Activated naive CD4-positive, alpha-beta T cell treated with anti-CD3 and anti-CD28 coated beads for 36 hours (primary cell): ENCODE measurements at regions of chr15 and their contacts with region 1.

Region 1: DNA sequence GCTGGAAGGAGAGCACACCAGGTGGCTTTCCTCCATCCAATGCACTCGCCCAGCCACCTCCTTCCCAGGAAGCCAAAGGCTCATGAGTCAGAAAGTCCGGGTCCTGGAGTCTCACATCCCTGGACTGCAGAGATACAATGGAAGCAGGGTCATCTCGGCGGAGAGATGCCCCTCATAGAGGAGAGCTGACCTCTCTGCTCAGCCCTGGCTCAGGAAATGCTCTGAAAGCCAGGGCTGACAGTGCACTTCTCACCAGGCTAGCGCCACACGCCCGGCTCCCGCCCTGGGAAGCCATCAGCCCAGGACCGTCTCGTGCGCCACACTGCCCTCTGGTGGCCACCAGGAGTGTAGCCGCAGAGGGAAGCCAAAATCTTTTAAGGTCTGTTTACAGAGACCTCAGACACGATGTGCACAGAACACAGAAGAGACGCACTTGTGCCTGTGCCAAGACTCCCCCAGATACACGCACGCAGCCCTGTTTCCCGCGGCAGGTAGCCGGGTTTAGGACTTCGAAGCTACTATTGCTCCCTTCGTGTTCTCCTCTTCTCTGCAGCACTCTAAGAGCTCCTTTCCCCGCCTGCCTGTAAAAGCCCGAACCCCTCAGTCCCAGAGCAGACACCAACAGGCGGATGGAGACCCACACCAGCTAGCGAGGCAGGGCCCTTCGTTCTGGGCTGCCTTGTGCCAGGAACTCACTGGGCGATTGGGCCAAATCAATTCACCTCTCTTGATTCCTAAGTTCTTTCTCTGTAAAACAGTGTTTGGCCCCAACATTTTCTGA is 9.7 kb downstream of the NTRK3 start:
- DNase-seq: peak; percentile 83
- H3K4me3 Mint-ChIP-seq: no peak overlapping the region
- H3K27ac Mint-ChIP-seq: no peak overlapping the region
- H3K4me1 Mint-ChIP-seq: peaks cover 5% of the 10 kb centered on the region
- H3K27me3 Mint-ChIP-seq: peaks cover 6% of the 10 kb centered on the region

Region 2: DNA sequence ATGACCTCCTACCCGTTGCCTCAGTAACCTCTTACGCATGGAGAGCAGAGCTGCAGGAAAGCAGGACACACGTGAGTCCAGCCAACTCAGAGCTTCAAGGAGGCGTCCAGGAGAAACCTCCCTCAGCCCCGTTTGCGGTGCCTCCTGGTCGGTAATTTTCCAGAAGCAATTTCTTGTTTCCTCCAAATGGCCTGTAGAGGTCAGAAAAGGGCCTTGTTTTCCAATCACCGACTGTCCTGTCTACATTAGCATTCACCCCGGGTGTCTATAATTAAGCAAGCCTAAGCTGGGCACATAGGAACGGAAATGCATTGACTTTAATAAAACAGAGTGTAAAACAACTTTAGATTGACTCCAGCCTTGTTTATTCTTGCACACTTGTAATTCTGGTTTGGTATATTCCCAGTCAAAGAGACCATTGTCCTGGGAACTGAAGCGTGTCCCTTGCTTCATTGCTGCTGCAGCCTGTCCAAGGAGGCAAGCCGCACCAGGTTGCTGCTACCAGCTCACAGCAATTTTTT is 1331.0 kb before region 1 on chr15:
- CTCF ChIA-PET with region 1: no interaction called
- intact Hi-C with region 1: loop called (anchors 5 kb)
- DNase-seq: no peak
- H3K4me3 Mint-ChIP-seq: no peak overlapping the region
- H3K27ac Mint-ChIP-seq: no peak overlapping the region
- H3K4me1 Mint-ChIP-seq: no peaks in the 10 kb centered on the region
- H3K27me3 Mint-ChIP-seq: peaks cover 5% of the 10 kb centered on the region

Region 3: GRCh38 chr15:88258093-88258641 is 11.3 kb after region 1 on chr15:
- CTCF ChIA-PET with region 1: interaction called, 26 read pairs
- intact Hi-C with region 1: no loop called
- DNase-seq: peak; percentile 57
- H3K4me3 Mint-ChIP-seq: peak overlapping the region; percentile 84
- H3K27ac Mint-ChIP-seq: peak overlapping the region; percentile 19
- H3K4me1 Mint-ChIP-seq: peaks cover 27% of the 10 kb centered on the region
- H3K27me3 Mint-ChIP-seq: peaks cover 61% of the 10 kb centered on the region

Region 4: DNA sequence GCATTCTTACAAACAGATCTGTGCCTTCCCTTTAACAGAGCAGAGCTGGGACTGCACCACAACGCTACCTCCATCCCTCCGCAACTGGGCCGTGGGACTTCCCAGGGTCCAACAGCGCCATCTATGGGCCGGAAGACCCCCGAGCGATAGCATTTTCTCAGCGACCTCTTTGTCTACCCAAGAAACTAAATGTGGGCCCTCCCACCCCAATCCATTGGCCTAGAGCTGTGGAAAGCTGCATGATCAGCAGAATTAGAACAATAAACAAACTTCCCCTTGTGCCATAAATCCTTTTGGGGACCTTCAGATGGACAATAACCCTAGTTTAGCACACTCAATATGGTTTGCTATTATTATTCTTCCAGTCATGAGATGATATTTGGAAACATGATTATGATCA is 84.4 kb after region 1 on chr15:
- CTCF ChIA-PET with region 1: interaction called, 3 read pairs
- intact Hi-C with region 1: loop called (anchors 2 kb)
- DNase-seq: peak; percentile 77
- H3K4me3 Mint-ChIP-seq: no peak overlapping the region
- H3K27ac Mint-ChIP-seq: no peak overlapping the region
- H3K4me1 Mint-ChIP-seq: no peaks in the 10 kb centered on the region
- H3K27me3 Mint-ChIP-seq: peaks cover 4% of the 10 kb centered on the region

Region 5: GRCh38 chr15:88664151-88664778 is 417.4 kb after region 1 on chr15:
- CTCF ChIA-PET with region 1: no interaction called
- intact Hi-C with region 1: loop called (anchors 10 kb)
- DNase-seq: peak; percentile 78
- H3K4me3 Mint-ChIP-seq: no peak overlapping the region
- H3K27ac Mint-ChIP-seq: no peak overlapping the region
- H3K4me1 Mint-ChIP-seq: peaks cover 31% of the 10 kb centered on the region
- H3K27me3 Mint-ChIP-seq: peaks cover 2% of the 10 kb centered on the region